Aorta (tissue), 5 donors: ENCODE measurements at regions of chr16 and their contacts with region 1.

Region 1: DNA sequence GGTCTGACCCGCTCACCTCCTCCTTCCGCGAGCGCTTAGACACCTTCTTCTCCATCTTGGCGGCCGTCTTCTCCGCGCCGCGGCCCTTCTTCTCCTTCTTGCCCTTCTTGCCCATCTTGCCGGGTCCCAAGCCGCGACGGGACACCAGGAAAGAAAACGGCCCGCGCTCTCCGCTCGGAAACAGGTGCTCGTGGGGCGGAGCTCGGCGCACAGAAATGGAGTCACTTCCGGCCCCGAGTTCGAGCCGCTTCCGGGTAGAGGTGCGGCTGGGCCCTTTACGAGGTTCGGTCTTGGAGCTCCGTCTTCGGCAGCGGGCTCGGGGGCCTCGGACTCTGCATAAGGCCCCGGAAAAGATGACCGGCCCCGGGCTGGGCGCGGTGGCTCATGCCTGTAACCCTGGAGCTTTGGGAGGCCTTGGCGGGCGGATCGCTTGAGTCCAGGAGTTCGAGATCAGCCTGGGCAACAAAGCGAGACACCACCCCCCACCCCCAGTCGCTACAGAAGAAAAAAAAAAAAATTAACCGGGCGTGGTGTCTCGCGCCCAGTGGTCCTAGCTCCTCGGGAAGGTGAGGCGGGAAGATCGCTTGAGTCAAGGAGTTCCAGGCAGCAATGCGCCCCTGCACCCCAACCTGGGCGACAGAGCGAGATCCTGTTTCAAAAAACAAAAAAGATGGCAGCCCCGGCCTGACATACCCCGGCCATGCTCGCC is at the start of gene KLHDC4:
- DNase-seq: peak; percentile 93 to 96
- ATAC-seq: peak; percentile 91
- H3K4me3 ChIP-seq: peak within 1 kb of the TSS; percentile 58 to 76
- H3K27ac ChIP-seq: peak within 1 kb of the TSS in 1 of 2 donors; percentile 80
- H3K4me1 ChIP-seq: no peaks in the 10 kb centered on the region
- H3K27me3 ChIP-seq: no peaks in the 10 kb centered on the region
- total RNA-seq, gene KLHDC4: 33.3 to 39.0 TPM

Region 2: GRCh38 chr16:87581833-87582203 is 184.1 kb before region 1 on chr16:
- intact Hi-C with region 1: loop called in 1 of 2 experiments (anchors 5 kb)
- DNase-seq: peak; percentile 89
- ATAC-seq: peak; percentile 90
- H3K4me3 ChIP-seq: no peak overlapping the region
- H3K27ac ChIP-seq: peak overlapping the region in 1 of 2 donors; percentile 82
- H3K4me1 ChIP-seq: no peaks in the 10 kb centered on the region
- H3K27me3 ChIP-seq: no peaks in the 10 kb centered on the region

Region 3: GRCh38 chr16:87587636-87588035 is 178.3 kb before region 1 on chr16:
- intact Hi-C with region 1: loop called (anchors 2 to 5 kb)
- DNase-seq: peak in 1 of 2 donors; percentile 17
- ATAC-seq: no peak
- H3K4me3 ChIP-seq: no peak overlapping the region
- H3K27ac ChIP-seq: no peak overlapping the region
- H3K4me1 ChIP-seq: no peaks in the 10 kb centered on the region
- H3K27me3 ChIP-seq: peaks cover 0 to 2% of the 10 kb centered on the region in 2 donors

Region 4: DNA sequence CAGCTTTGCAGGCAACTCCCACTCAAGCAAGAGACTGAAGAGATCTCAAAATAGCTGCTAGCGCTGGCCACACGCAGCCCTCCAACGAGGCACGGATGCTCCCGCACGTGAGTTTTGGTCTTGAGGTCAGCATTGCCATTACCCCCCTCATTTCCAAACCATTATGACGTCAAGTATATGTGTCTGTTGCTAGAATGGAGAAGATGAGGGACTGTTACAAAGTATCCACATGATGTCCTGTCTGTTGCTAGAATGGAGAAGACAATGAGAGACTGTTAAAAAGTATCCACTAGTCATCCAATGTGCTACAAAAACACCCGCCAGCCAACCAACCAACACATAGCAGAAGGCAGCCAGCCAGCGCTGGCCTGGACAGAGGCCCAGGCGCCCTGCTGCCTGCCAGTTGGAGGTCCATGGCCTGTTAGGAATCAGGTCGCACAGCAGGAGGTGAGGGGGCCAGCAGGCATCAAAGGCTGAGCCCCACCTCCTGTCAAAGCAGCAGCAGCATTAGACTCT is 25.0 kb before region 1 on chr16:
- intact Hi-C with region 1: no loop called
- DNase-seq: no peak
- ATAC-seq: no peak
- H3K4me3 ChIP-seq: no peak overlapping the region
- H3K27ac ChIP-seq: no peak overlapping the region
- H3K4me1 ChIP-seq: no peaks in the 10 kb centered on the region
- H3K27me3 ChIP-seq: no peaks in the 10 kb centered on the region

Region 5: GRCh38 chr16:88569985-88570690 is 804.2 kb after region 1 on chr16 and contains the start of gene ZC3H18:
- intact Hi-C with region 1: loop called in 1 of 2 experiments (anchors 5 kb)
- DNase-seq: peak; percentile 98 to 99
- ATAC-seq: peak; percentile 99
- H3K4me3 ChIP-seq: peak within 1 kb of the TSS; percentile 80
- H3K27ac ChIP-seq: peak within 1 kb of the TSS in 1 of 2 donors; percentile 58
- H3K4me1 ChIP-seq: peaks cover 0 to 3% of the 10 kb centered on the region in 2 donors
- H3K27me3 ChIP-seq: no peaks in the 10 kb centered on the region
- total RNA-seq, gene ZC3H18: 37.7 to 38.5 TPM